ENCODE measurements at regions of chr11 and their contacts with region 1.

Region 1: DNA sequence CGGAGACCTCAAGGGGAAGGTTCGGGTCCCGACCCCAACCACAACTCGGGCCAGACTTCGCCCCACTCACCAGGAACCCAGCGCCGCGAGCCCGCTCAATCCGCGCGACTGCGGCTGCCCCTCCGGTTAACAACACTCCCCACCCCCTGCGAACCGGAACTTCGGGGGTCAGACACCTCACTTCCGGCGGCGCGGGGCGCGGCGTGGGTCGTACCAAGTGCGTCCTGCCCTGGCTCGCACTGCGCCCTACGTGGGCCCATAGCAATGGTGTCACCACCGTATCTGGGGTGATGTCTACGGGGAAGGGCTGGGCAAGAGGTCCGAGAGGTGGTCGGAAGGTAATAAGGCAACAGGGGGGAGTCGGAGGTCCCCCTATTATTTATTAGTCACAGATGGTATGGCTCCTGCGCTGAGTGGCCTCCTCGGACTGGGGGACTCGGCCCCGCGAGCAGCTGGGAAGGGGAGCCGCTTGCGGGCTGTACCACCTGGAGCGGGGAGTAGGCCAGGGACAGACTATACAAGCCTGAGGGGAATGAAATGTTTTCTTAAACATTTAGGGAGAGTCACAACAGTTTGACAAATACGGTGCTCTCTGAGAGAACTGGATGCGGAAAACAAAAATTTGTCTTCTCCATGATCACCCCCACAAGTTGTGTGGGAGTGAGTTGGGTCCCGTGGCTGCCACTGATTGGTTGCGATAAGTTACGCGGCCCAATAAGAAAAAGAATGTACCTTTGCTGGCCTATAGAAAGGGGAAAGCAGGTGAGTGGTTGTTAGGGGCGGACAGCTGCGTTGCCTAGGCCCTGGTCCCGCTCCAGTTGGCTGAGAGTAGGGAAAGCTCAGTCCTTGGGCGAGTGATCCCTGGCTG is at the start of gene SYVN1:
- DNase-seq: peak; percentile 90 to 93 (median 90)
- H3K4me3 ChIP-seq: peak within 1 kb of the TSS; percentile 51 to 98 (median 92)
- H3K4me3 Mint-ChIP-seq: peak within 1 kb of the TSS; percentile 92 to 99
- H3K27ac ChIP-seq: peak within 1 kb of the TSS; percentile 99 to 100
- H3K27ac Mint-ChIP-seq: peak within 1 kb of the TSS; percentile 99 to 100 (median 99)
- H3K4me1 ChIP-seq: peaks cover 30 to 31% of the 10 kb centered on the region in 2 donors
- H3K4me1 Mint-ChIP-seq: peaks cover 29% of the 10 kb centered on the region
- H3K27me3 ChIP-seq: no peaks in the 10 kb centered on the region
- H3K27me3 Mint-ChIP-seq: peaks cover 0 to 2% (median 2%) of the 10 kb centered on the region in 3 donors
- CTCF ChIP-seq: no peak
- polyA plus RNA-seq, gene SYVN1: 3.5 to 81.6 (median 6.4) TPM

Region 2: DNA sequence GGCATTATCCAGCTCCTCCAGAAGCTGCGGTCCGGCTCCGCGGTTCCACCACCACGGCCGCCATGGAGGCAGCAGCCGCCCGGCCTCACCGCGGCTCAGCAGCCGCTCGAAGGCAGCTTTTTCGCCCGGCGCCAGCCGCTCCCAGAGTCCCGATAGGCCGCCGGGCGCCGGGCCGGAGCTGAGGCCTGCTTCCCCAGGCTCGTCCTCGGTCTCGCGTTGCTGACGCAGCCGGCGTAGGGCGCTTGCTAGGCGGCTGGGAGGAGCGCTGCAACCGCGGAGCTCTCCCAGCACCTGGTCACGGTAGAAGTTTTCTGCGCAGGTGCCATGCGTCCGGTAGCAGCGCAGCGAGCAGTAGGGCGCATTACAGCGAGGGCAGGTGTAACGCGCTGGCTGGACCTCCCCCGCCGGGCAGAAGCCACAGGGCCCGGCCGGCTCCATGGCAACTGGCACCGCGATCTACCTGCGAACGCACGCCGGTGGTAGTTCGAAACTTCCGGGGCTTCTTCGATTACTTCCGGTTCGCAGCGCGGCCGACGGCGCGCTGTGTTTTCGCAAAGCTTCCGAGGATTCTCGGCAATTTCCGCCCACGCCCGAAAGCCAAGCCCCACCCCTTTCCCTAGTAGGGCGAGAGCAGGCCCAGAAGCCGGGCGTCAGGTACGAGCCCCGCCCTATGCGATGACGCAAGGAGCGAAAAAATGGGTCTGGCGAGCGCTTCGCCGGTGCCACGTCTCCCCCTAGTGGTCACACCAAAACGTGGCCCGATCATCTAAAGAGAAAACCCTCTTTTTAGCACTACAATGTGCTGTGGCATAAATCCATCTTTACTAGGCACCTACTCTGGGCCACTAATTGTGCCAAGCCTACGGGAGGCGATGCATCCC is 17.2 kb before region 1 on chr11 and contains the start of gene ZNHIT2:
- intact Hi-C with region 1: loop called in 1 of 2 experiments (anchors 2 kb)
- DNase-seq: peak; percentile 99
- H3K4me3 ChIP-seq: peak within 1 kb of the TSS; percentile 60 to 93 (median 91)
- H3K4me3 Mint-ChIP-seq: peak within 1 kb of the TSS; percentile 82 to 90
- H3K27ac ChIP-seq: peak within 1 kb of the TSS; percentile 67 to 85
- H3K27ac Mint-ChIP-seq: peak within 1 kb of the TSS; percentile 79 to 90 (median 88)
- H3K4me1 ChIP-seq: peaks cover 30 to 48% of the 10 kb centered on the region in 2 donors
- H3K4me1 Mint-ChIP-seq: peaks cover 39% of the 10 kb centered on the region
- H3K27me3 ChIP-seq: peaks cover 0 to 15% of the 10 kb centered on the region in 2 donors
- H3K27me3 Mint-ChIP-seq: peaks cover 13 to 17% (median 13%) of the 10 kb centered on the region in 3 donors
- CTCF ChIP-seq: peak; percentile 94
- polyA plus RNA-seq, gene ZNHIT2: 2.1 to 9.4 (median 5.8) TPM

Region 3: GRCh38 chr11:65150509-65151271 is 16.1 kb after region 1 on chr11:
- intact Hi-C with region 1: loop called in 1 of 2 experiments (anchors 2 kb)
- DNase-seq: peak; percentile 95 to 99 (median 99)
- H3K4me3 ChIP-seq: peak overlapping the region in 1 of 3 experiments; percentile 24
- H3K4me3 Mint-ChIP-seq: peak overlapping the region; percentile 64 to 81
- H3K27ac ChIP-seq: peak overlapping the region; percentile 70 to 77
- H3K27ac Mint-ChIP-seq: peak overlapping the region; percentile 87 to 98 (median 96)
- H3K4me1 ChIP-seq: peaks cover 43 to 48% of the 10 kb centered on the region in 2 donors
- H3K4me1 Mint-ChIP-seq: peaks cover 47% of the 10 kb centered on the region
- H3K27me3 ChIP-seq: no peaks in the 10 kb centered on the region
- H3K27me3 Mint-ChIP-seq: peaks cover 0 to 2% (median 0%) of the 10 kb centered on the region in 3 donors
- CTCF ChIP-seq: no peak

Measured in CD14-positive monocyte (primary cell).